Colonic mucosa (tissue), 4 donors: ENCODE measurements at regions of chrX and their contacts with region 1.

Region 1: GRCh38 chrX:107669885-107670628 is 41.7 kb downstream of the PRPS1 start:
- DNase-seq: no peak
- H3K4me3 ChIP-seq: no peak overlapping the region
- H3K27ac ChIP-seq: no peak overlapping the region
- H3K4me1 ChIP-seq: no peaks in the 10 kb centered on the region
- H3K27me3 ChIP-seq: no peaks in the 10 kb centered on the region
- CTCF ChIP-seq: no peak

Region 2: DNA sequence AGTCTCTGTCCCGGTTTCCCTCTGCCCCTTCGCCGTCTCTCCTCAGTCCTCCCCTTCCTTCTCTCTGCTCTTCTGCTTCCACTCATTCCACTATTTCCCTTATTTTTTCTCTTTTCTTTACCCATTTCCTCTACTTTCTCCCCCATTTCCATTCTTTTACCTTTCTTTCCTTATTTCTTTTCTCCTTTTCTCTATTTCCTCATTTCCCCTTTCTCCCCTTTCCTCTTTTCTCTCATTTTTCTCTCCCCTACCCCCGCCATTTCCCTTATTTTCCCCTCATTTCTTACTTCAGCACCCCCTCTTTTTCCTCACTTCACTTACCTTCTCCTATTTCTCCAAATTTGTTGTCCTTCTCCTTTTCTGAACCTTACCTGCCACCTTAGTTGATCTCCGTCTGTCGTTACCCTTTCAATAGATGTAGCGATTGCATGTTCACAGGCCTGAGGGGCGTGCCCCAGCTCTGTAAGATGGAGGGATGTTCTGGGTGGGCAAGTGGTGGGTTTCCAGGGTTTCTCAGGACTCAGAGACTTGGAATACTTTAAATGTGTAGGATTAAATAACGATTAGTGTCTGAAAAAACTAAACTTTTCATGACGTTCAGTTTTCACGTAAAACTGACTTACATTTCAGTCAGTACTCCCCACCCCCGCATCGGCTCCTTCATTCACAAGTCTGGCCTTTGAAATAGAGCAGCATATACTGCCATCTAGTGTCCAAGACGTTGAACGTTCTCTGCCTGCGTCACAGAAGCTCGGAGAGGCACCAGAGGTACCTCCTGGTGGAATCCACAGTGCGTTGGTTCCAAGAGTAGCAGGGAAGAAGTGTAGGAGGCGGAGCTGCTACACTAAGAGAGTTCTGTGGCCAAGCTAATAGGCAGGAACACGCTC is 106.8 kb after region 1 on chrX:
- intact Hi-C with region 1: loop called (anchors 5 kb)
- DNase-seq: peak; percentile 78
- H3K4me3 ChIP-seq: peak overlapping the region; percentile 41
- H3K27ac ChIP-seq: no peak overlapping the region
- H3K4me1 ChIP-seq: no peaks in the 10 kb centered on the region
- H3K27me3 ChIP-seq: peaks cover 4% of the 10 kb centered on the region
- CTCF ChIP-seq: peak; percentile 77